AG04450 (cell line): ENCODE measurements at regions of chr14 and their contacts with region 1.

Region 1: DNA sequence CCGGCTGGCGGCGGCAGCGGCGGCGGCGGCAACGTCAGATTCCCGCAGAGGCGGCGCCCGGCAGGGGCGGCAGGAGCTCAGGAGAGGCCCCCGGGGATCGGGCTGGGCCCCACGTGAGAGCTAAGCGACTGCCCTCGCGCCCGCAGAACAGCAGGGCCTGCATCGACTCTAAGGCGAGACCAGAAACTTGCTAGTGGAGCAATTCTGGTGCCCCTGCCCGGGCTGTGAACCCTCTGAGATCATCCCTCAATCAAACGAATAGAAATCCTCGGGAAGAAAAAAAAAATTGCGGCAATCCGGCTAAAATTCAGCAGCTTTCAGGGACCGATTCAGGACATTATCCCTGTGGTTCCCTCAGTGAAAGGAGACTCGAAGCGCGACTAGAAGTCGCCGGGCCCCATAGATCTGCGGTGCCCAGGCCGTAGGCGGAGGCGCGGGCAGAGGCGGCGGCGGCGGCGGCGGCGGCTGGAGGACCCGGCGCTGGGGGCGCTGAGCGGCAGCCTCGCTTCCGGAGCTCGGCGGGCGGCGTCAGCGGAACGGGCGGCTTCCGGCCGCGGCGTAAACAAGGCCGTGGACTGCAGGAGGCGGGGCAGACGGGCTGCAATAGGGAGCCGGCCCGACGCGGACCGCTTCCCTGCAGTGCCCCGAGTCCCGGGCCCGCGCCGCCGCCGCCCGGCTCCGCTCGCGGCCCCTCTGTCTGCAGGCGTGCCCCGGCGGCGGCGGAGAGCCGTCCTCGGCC is at the start of gene KLHDC2:
- DNase-seq: peak; percentile 67
- H3K4me3 ChIP-seq: peak within 1 kb of the TSS; percentile 97
- H3K27ac ChIP-seq: peak within 1 kb of the TSS; percentile 96
- H3K27me3 ChIP-seq: no peaks in the 10 kb centered on the region
- CTCF ChIP-seq: no peak
- polyA plus RNA-seq, gene KLHDC2: 59.8 and 81.6 TPM in 2 replicates

Region 2: GRCh38 chr14:49585803-49586672 is 181.7 kb before region 1 on chr14 and contains the start of gene RPS29:
- CTCF ChIA-PET with region 1: interaction called, 3 read pairs
- POLR2A ChIA-PET with region 1: interaction called, 11 read pairs
- DNase-seq: peak; percentile 99
- H3K4me3 ChIP-seq: peak within 1 kb of the TSS; percentile 95
- H3K27ac ChIP-seq: peak within 1 kb of the TSS; percentile 67
- H3K27me3 ChIP-seq: no peaks in the 10 kb centered on the region
- CTCF ChIP-seq: no peak
- polyA plus RNA-seq, gene RPS29: 3,597 and 3,950 TPM in 2 replicates

Region 3: DNA sequence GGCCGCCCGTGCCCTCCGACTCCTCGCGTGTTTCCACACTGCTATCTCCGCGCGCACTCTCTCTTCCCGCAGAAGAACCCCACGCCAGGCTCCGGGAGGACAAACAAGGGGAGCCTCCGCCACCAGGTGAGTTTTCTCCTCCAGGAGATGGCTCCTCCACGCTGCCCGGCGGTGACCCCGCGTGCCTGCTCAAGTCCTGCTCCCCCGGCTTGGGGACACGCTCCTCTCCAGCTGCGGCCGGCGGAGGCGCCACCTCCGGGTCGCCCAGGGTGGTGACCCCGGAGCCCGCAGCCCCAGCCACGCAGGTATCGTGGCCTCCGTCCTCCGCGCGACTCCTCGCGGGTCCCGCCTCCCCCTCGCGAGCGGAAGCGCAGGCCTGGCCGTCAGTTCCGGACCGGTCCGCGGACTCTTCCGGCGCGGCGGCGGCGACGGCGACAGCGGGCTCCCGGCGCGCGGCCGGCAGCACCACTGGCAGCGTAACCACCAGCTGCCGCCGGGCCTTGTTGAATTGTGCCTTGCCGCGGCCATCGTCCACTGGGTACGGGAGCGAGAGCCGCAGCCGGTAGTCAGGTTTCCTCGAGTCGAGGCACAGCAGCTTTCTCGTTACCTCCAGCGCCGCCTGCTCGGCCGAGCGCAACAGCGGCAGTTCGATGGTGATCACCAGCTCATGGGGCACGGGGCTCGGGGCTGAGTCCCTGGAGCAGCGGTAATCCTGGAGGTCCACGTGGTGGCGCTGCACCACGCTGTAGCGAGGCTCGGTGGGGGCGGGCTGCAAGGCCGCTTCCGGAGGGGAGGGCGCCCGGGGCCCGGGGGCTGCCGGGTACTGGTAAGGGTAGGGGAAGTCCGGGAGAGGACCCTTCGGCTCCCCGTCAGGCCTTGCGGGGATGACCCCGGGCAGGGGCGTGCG is 133.8 kb before region 1 on chr14:
- CTCF ChIA-PET with region 1: interaction called, 50 read pairs
- POLR2A ChIA-PET with region 1: interaction called, 41 read pairs
- DNase-seq: peak; percentile 88
- H3K4me3 ChIP-seq: peak overlapping the region; percentile 94
- H3K27ac ChIP-seq: peak overlapping the region; percentile 92
- H3K27me3 ChIP-seq: no peaks in the 10 kb centered on the region
- CTCF ChIP-seq: peak; percentile 73

Region 4: GRCh38 chr14:49692811-49693734 is 74.7 kb before region 1 on chr14 and contains the start of gene KLHDC1:
- CTCF ChIA-PET with region 1: interaction called, 3 read pairs
- POLR2A ChIA-PET with region 1: interaction called, 22 read pairs
- DNase-seq: peak; percentile 32
- H3K4me3 ChIP-seq: peak within 1 kb of the TSS; percentile 72
- H3K27ac ChIP-seq: peak within 1 kb of the TSS; percentile 82
- H3K27me3 ChIP-seq: no peaks in the 10 kb centered on the region
- CTCF ChIP-seq: no peak
- polyA plus RNA-seq, gene KLHDC1: 0.63 and 1.2 TPM in 2 replicates

Region 5: DNA sequence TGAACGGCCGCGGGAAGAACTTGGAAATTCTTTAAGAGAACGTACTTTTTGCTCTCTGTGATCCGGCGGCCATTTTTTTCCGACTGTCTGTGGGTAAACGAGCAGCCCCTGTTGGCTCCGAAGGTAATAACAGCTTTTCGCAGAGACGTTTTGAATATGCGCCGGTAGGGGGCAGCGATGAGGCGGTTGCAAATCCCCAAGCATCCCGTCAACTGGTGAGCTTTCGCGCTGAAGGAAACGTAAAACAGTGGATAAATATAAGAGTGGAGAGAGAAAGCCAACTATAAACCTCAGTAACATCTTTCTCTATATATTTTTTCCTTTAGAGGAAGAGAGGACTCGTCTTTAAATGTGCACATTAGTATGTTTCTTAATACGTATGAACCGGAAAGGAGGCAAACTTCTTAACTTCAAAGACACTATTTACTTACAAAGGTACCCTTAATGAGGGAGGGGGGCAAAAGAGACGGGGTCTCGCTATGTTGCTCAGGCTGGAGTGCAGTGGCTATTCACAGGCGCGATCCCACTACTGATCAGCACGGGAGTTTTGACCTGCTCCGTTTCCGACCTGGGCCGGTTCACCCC is 94.5 kb after region 1 on chr14:
- CTCF ChIA-PET with region 1: no interaction called
- POLR2A ChIA-PET with region 1: no interaction called
- DNase-seq: peak; percentile 84
- H3K4me3 ChIP-seq: peak overlapping the region; percentile 62
- H3K27ac ChIP-seq: peak overlapping the region; percentile 100
- H3K27me3 ChIP-seq: no peaks in the 10 kb centered on the region
- CTCF ChIP-seq: peak; percentile 100

Region 6: GRCh38 chr14:50099335-50099734 is 331.6 kb after region 1 on chr14:
- CTCF ChIA-PET with region 1: no interaction called
- POLR2A ChIA-PET with region 1: no interaction called
- DNase-seq: no peak
- H3K4me3 ChIP-seq: no peak overlapping the region
- H3K27ac ChIP-seq: no peak overlapping the region
- H3K27me3 ChIP-seq: no peaks in the 10 kb centered on the region
- CTCF ChIP-seq: no peak